Left ventricle myocardium superior (tissue), 1 donor: ENCODE measurements at regions of chr5 and their contacts with region 1.

Region 1: GRCh38 chr5:177370488-177371119 is 12.9 kb downstream of the RGS14 start:
- DNase-seq: peak; percentile 80
- ATAC-seq: peak; percentile 64

Region 2: GRCh38 chr5:177327539-177328522 is 42.8 kb before region 1 on chr5:
- intact Hi-C with region 1: loop called (anchors 10 kb)
- DNase-seq: no peak
- ATAC-seq: peak; percentile 89